Testis (tissue), 5 donors: ENCODE measurements at regions of chr2 and their contacts with region 1.

Region 1: GRCh38 chr2:2121887-2122286 is 209.2 kb downstream of the MYT1L start:
- DNase-seq: no peak
- H3K4me3 ChIP-seq: no peak overlapping the region
- H3K27ac ChIP-seq: no peak overlapping the region
- H3K4me1 ChIP-seq: no peaks in the 10 kb centered on the region
- H3K27me3 ChIP-seq: no peaks in the 10 kb centered on the region
- CTCF ChIP-seq: no peak
- POLR2A ChIP-seq: no peak

Region 2: GRCh38 chr2:1931003-1931914 is 190.6 kb before region 1 on chr2:
- intact Hi-C with region 1: no loop called
- DNase-seq: no peak
- H3K4me3 ChIP-seq: no peak overlapping the region
- H3K27ac ChIP-seq: no peak overlapping the region
- H3K4me1 ChIP-seq: no peaks in the 10 kb centered on the region
- H3K27me3 ChIP-seq: no peaks in the 10 kb centered on the region
- CTCF ChIP-seq: no peak
- POLR2A ChIP-seq: no peak

Region 3: GRCh38 chr2:3309496-3310355 is 1187.8 kb after region 1 on chr2:
- intact Hi-C with region 1: loop called (anchors 5 kb)
- DNase-seq: peak; percentile 73
- H3K4me3 ChIP-seq: peak overlapping the region in 1 of 2 donors; percentile 4
- H3K27ac ChIP-seq: peak overlapping the region in 1 of 2 donors; percentile 41
- H3K4me1 ChIP-seq: peaks cover 3% of the 10 kb centered on the region
- H3K27me3 ChIP-seq: no peaks in the 10 kb centered on the region
- CTCF ChIP-seq: no peak
- POLR2A ChIP-seq: no peak